AG04449 (cell line): ENCODE measurements at regions of chr21 and their contacts with region 1.

Region 1: DNA sequence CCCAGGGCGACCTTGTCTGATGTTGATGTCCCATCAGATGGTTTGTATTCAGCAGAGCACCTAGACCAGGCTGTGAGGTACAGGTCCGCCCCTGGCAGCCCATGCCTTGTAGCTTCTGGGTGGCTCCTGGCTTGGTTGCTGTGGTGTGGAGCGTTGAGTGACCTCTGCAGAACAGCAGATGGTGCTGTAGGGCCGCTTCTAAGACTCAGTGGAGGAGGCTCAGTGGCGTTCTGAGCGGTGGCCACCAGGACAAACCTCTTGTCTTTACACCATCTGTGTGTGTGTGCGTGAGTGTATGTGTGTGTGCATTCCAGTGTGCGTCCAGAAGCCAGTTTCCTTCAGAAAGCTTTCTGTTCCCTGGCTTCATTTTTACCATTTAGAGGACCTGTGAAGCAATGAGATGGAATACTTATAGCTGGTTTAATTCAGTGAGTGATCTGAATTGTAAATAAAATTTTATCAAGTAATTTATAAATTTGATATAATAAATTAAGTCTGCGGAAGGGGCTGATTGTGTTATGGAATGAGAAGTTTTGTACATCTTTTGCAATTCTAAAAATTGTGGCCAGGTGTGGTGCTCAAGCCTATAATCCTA is 66.1 kb downstream of the ADARB1 start:
- DNase-seq: peak; percentile 78
- H3K4me3 ChIP-seq: no peak overlapping the region
- CTCF ChIP-seq: peak; percentile 98

Region 2: DNA sequence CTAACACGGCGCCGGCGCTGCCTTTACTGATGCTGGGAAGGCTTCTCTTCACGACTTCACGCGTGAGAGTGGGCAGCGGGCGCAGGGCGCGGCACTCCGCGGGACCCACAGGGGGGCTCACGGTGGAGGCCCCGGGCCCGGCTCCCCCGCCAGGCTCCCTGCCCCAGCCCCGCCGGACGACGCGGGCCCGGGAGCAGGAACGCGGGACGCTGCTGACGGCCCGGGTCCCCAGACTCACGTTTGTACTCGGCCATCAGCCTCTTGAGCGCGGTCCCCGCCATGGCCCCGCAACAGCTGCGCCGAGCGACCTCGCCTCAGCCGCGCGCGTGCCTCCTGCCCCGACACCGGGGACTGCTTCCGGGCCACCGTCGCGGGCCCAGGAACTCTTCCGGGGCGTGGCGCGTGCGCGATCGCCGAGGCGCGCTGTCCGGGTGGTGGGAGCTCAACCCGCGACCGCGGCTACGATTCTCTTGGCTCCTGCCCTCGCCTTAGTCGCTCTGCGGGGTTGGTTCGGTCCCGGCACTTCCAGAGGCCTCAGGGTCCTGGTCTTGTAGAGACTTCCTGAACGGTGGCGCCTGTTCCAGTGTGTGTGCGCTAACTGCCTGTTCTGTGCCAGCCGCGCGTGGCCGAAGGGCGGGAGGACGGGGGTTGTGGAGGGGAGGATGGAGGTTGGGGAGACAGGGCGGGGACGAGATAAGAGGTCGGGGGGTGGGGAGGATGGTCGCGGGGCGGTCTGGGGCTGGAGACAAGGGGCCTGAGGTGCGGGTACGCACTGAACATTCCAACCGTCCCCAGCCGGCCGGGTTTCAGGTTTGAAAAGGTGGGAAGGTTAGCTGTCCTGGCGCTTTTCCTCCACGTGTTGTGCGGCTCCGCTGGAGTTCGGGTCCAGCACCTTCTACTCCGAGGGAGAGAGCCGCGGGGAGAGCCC is 338.7 kb before region 1 on chr21 and contains the start of gene UBE2G2:
- CTCF ChIA-PET with region 1: interaction called, 10 read pairs
- POLR2A ChIA-PET with region 1: no interaction called
- DNase-seq: no peak
- H3K4me3 ChIP-seq: peak within 1 kb of the TSS; percentile 93
- CTCF ChIP-seq: no peak

Region 3: GRCh38 chr21:44949779-44950198 is 190.7 kb before region 1 on chr21:
- CTCF ChIA-PET with region 1: interaction called, 601 read pairs
- POLR2A ChIA-PET with region 1: no interaction called
- DNase-seq: no peak
- H3K4me3 ChIP-seq: no peak overlapping the region
- CTCF ChIP-seq: peak; percentile 98

Region 4: GRCh38 chr21:45109831-45110492 is 30.5 kb before region 1 on chr21:
- CTCF ChIA-PET with region 1: interaction called, 30 read pairs
- POLR2A ChIA-PET with region 1: no interaction called
- DNase-seq: no peak
- H3K4me3 ChIP-seq: no peak overlapping the region
- CTCF ChIP-seq: no peak

Region 5: GRCh38 chr21:45228171-45228641 is 87.8 kb after region 1 on chr21:
- CTCF ChIA-PET with region 1: interaction called, 21 read pairs
- POLR2A ChIA-PET with region 1: interaction called, 3 read pairs
- DNase-seq: peak; percentile 94
- H3K4me3 ChIP-seq: peak overlapping the region; percentile 15; the same call in 1 of the 2 replicates
- CTCF ChIP-seq: no peak

Region 6: GRCh38 chr21:45287438-45288391 is 147.3 kb after region 1 on chr21 and contains the start of gene POFUT2:
- CTCF ChIA-PET with region 1: interaction called, 304 read pairs
- POLR2A ChIA-PET with region 1: interaction called, 4 read pairs
- DNase-seq: no peak
- H3K4me3 ChIP-seq: peak within 1 kb of the TSS; percentile 80
- CTCF ChIP-seq: no peak

Region 7: DNA sequence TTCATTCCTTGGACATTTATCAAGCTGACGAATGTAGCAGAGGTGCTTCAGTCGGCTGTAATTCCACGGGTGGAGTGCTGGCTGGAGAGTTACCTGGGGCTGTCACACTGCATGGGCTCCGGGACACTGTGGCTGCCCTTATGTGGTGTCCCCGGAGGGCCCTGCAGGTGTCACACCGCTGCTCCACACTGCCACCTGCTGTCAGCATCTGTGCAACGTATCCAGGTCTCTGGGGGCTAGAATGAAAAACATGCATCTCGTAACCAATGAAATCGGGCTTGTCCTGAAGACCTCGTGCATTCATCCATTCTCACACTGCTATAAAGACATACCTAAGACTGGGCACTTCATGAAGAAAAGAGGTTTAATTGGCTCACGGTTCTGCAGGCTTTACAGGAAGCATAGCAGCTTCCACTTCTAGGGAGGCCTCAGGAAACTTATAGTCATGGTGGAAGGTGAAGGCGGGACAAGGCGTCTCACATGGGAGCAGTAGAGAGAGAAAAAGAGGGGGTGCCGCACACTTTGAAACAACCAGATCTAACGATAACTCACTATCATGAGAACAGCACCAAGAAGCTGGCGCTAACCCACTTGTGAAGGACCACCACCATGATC is 456.4 kb after region 1 on chr21:
- CTCF ChIA-PET with region 1: interaction called, 12 read pairs
- POLR2A ChIA-PET with region 1: no interaction called
- DNase-seq: no peak
- H3K4me3 ChIP-seq: no peak overlapping the region
- CTCF ChIP-seq: peak; percentile 89